CD8-positive, alpha-beta T cell (primary cell): ENCODE measurements at regions of chr15 and their contacts with region 1.

Region 1: GRCh38 chr15:52568601-52569256 is at the start of gene ARPP19:
- DNase-seq: peak; percentile 56 to 90 (median 77)
- ATAC-seq: peak; percentile 72
- H3K4me3 ChIP-seq: peak within 1 kb of the TSS; percentile 66 to 74
- H3K4me3 Mint-ChIP-seq: peak within 1 kb of the TSS; percentile 94
- H3K27ac ChIP-seq: peak within 1 kb of the TSS; percentile 93 to 95
- H3K27ac Mint-ChIP-seq: peak within 1 kb of the TSS; percentile 99
- H3K4me1 ChIP-seq: peaks cover 29% of the 10 kb centered on the region
- H3K4me1 Mint-ChIP-seq: peaks cover 40% of the 10 kb centered on the region
- H3K27me3 ChIP-seq: no peaks in the 10 kb centered on the region
- H3K27me3 Mint-ChIP-seq: no peaks in the 10 kb centered on the region
- CTCF ChIP-seq: no peak
- total RNA-seq, gene ARPP19: 141 to 156 TPM

Region 2: DNA sequence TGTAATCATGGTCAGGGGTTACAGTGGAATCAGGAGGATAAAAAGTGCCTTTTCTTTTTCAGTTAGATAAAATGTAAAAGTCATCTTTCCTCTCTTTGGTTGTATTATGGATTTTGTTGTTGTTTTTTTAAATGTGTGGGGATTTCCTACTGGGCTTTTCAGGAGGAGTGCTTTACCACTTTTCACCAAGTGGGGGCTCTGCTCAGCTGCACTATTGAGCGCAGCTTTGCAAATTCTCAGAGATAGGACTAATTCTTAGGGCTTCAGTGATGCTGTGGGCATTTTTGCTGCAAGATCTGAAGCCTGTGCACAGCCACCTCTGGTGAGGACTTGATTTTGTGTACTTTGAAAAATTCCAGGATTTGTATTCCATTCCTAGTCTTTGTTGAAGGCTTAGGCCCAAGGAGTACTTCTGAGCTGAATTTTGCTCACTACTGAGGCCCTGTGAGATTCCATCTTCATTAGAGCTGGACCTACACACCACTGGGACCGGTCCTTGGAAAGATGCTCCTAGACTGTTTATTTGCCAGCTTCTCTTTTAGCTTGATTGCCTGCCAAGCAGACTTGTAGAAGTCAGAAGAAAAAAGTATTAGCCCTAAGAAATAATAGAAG is 385.1 kb before region 1 on chr15:
- CTCF ChIA-PET with region 1: no interaction called
- POLR2A ChIA-PET with region 1: no interaction called
- intact Hi-C with region 1: no loop called
- DNase-seq: peak in 3 of 9 experiments; percentile 45 to 59 (median 46)
- ATAC-seq: no peak
- H3K4me3 ChIP-seq: no peak overlapping the region
- H3K4me3 Mint-ChIP-seq: no peak overlapping the region
- H3K27ac ChIP-seq: no peak overlapping the region
- H3K27ac Mint-ChIP-seq: no peak overlapping the region
- H3K4me1 ChIP-seq: peaks cover 10% of the 10 kb centered on the region
- H3K4me1 Mint-ChIP-seq: peaks cover 16% of the 10 kb centered on the region
- H3K27me3 ChIP-seq: no peaks in the 10 kb centered on the region
- H3K27me3 Mint-ChIP-seq: no peaks in the 10 kb centered on the region
- CTCF ChIP-seq: peak; percentile 34

Region 3: DNA sequence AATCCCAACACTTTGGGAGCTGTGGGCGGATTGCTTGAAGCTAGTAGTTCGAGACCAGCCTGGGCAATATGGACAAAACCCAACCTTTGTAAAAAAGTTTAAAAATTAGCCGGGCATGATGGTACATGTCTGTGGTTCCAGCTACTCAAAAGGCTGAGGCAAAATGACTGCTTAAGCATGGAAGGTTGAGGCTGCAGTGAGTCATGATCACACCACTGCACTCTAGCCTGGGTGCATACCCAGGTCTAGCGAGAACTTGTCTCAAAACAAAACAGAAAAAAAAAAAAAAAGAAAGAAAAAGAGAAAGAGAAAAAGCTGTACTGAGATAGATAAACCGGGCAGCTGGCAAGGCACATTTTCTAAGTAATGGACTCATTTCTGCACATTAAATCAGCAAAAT is 10.5 kb before region 1 on chr15:
- CTCF ChIA-PET with region 1: interaction called, 3 read pairs
- POLR2A ChIA-PET with region 1: interaction called, 4 read pairs
- intact Hi-C with region 1: loop called in 1 of 2 experiments (anchors 1 kb)
- DNase-seq: peak in 5 of 9 experiments; percentile 17 to 62 (median 51)
- ATAC-seq: peak; percentile 86
- H3K4me3 ChIP-seq: no peak overlapping the region
- H3K4me3 Mint-ChIP-seq: no peak overlapping the region
- H3K27ac ChIP-seq: no peak overlapping the region
- H3K27ac Mint-ChIP-seq: peak overlapping the region; percentile 55
- H3K4me1 ChIP-seq: no peaks in the 10 kb centered on the region
- H3K4me1 Mint-ChIP-seq: peaks cover 62% of the 10 kb centered on the region
- H3K27me3 ChIP-seq: no peaks in the 10 kb centered on the region
- H3K27me3 Mint-ChIP-seq: no peaks in the 10 kb centered on the region
- CTCF ChIP-seq: no peak

Region 4: GRCh38 chr15:52735231-52736089 is 166.7 kb after region 1 on chr15:
- CTCF ChIA-PET with region 1: no interaction called
- POLR2A ChIA-PET with region 1: no interaction called
- intact Hi-C with region 1: loop called in 1 of 2 experiments (anchors 10 kb)
- DNase-seq: peak; percentile 39 to 83 (median 64)
- ATAC-seq: peak; percentile 89
- H3K4me3 ChIP-seq: no peak overlapping the region
- H3K4me3 Mint-ChIP-seq: no peak overlapping the region
- H3K27ac ChIP-seq: no peak overlapping the region
- H3K27ac Mint-ChIP-seq: no peak overlapping the region
- H3K4me1 ChIP-seq: peaks cover 3% of the 10 kb centered on the region
- H3K4me1 Mint-ChIP-seq: peaks cover 5% of the 10 kb centered on the region
- H3K27me3 ChIP-seq: no peaks in the 10 kb centered on the region
- H3K27me3 Mint-ChIP-seq: peaks cover 7% of the 10 kb centered on the region
- CTCF ChIP-seq: peak; percentile 95